Mammary epithelial cell (primary cell): ENCODE measurements at regions of chr12 and their contacts with region 1.

Region 1: DNA sequence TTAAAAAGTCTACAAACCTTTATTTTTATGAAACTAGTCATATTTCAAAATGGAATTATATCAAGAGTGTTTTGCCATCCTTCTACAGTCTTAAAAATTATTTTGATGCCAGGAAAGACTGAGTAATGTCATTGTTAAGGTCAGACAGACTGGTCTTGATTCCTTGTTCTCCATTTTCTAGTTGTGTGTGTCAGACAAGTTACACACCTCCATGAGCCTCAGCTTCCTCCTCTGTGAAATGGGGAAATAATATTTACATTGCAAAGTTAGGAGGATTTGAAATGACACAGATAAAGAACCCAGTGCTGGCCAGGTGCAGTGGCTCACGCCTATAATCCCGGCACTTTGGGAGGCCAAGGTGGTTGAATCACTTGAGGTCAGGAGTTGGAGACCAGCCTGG is 47.4 kb upstream of the ELK3 start:
- DNase-seq: no peak
- H3K4me3 ChIP-seq: no peak overlapping the region
- H3K27ac ChIP-seq: no peak overlapping the region
- H3K4me1 ChIP-seq: no peaks in the 10 kb centered on the region
- H3K27me3 ChIP-seq: no peaks in the 10 kb centered on the region
- CTCF ChIP-seq: no peak

Region 2: DNA sequence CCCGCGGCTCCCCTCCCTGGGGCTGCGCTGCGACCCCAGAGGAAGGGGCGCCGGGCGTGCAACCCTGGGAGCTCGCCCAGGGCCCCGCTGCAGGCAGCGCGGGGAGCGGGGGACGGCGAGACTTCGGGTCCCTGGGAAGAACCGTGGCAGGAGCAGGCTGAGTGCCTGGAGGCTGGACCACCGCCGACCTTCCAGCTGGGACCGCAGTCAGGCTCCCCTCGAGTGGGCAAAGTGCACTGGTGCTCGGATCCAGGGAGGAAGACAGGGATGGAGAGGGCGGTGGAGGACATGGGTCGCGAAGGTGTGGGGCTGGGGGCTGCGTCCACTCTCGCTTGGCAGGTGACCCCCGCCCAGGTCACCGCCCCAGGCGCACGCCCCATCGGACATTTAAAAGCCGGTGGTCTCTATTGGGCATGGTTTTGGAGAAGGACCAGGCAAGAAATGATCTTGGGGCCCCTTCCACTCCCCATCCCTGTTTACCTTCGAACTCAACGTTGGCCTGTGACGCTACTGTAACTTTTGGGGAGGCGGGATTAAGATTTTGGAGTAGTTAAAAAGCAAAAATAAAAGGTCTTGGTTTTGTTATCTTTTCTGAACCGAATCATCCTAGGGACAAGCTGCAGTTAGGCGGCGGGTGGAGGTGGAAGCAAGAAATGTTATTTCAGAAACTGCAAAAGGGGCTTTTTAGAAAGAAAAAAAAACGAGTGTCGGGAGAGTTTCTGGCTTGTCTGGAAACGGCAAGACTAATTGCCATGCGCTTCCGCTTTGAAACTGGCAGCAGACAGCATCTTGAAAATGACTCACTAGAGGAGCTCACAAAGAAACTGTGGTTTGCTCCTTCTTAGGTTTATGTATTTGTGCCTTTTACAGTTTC is 48.5 kb after region 1 on chr12:
- CTCF ChIA-PET with region 1: no interaction called
- dilution Hi-C with region 1: no loop called
- in situ Hi-C with region 1: no loop called
- intact Hi-C with region 1: loop called (anchors 5 kb)
- DNase-seq: peak; percentile 84
- H3K4me3 ChIP-seq: peak overlapping the region; percentile 95 to 99 (median 98)
- H3K27ac ChIP-seq: peak overlapping the region; percentile 99
- H3K4me1 ChIP-seq: peaks cover 30% of the 10 kb centered on the region
- H3K27me3 ChIP-seq: no peaks in the 10 kb centered on the region
- CTCF ChIP-seq: no peak